ENCODE measurements at regions of chr17 and their contacts with region 1.

Region 1: DNA sequence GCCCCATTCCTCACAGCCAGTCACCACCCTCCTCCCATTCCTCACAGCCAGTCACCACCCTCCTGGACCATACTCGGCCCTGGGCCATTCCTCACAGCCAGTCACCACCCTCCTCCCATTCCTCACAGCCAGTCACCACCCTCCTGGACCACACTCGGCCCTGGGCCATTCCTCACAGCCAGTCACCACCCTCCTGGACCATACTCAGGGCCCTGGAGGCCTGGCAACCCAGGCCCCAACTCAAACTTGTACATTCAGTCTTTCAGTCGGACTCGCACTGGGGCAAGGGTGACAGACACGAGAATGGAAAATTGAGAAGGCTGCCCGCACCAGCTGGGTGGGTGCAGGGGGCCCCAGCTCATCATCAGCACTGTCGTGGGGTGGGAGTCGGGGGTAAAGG is 30.4 kb upstream of the FOXK2 start:
- DNase-seq: no peak
- H3K4me3 ChIP-seq: no peak overlapping the region
- CTCF ChIP-seq: no peak

Region 2: DNA sequence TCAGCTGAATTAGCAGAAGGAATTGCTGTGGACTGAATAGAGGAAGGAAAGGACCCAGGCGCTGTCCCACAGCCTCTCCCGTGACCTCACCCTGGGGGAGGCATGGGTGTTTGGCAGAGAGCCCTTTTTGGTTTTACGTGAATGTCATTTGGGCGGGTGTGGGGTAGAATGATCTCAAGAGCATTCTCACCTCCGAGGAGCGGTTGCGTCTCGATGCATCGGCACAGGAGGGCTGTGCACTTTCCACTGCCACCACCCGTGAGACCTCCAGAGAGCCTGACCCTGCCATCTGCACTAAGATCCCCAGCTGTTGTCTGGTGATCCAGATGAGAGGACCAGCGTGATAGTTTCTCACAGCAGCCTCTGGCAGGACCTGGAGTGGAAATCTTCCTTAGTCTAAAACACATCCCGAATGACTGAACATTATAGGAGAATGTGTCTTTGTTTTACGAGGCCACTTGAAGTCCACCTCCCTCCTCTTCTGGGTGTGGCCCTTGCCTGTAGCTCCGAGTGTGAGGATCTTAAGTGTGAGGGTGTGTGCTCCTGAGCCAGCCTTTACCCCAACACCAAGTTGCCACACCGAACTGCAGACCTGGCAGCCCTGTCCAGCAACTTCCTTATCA is 59.7 kb after region 1 on chr17:
- in situ Hi-C with region 1: loop called (anchors 10 kb)
- DNase-seq: no peak
- H3K4me3 ChIP-seq: no peak overlapping the region
- CTCF ChIP-seq: no peak